Astrocyte of the cerebellum (primary cell): ENCODE measurements at regions of chr3 and their contacts with region 1.

Region 1: GRCh38 chr3:11211531-11212298 is 57.4 kb downstream of the HRH1 start:
- DNase-seq: no peak
- H3K4me3 ChIP-seq: no peak overlapping the region
- CTCF ChIP-seq: peak; percentile 31

Region 2: DNA sequence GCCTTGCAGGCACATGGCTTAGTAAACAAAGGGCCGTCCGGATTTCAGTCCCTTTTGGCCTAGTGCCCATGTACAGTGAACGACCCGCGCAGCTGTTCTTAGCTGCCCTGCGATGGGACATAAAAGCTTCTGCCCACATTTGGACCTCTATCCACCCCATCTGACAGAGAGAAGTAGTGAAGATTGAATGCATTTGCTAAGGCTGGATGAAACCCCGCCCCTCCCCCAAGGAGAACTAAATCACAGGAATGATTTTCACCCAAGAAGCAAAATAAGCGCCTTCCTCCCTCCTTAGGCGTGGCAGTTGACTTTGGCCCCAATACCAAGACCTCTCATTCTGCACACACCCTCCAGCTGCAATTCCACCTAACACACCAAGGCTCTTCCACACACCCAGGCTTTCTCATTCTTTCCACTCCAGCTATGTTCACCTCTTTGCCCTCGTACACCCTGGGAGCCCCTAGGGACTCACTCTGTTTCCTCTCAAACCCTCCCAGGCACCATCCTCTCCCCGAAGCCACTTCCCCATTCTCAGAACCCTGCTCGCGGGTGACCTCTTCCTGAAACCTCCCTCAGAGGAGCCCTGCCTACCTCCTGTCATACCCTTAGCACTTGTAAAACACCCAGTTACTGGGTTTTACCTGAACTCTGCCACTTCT is 71.5 kb before region 1 on chr3:
- in situ Hi-C with region 1: loop called (anchors 5 kb)
- DNase-seq: no peak
- H3K4me3 ChIP-seq: no peak overlapping the region
- CTCF ChIP-seq: no peak